ENCODE measurements at regions of chr12 and their contacts with region 1.

Region 1: GRCh38 chr12:46372544-46373110 is at the start of gene SLC38A2:
- DNase-seq: peak; percentile 95 to 98 (median 96)
- ATAC-seq: peak; percentile 96
- H3K4me3 ChIP-seq: peak within 1 kb of the TSS; percentile 87
- H3K4me3 Mint-ChIP-seq: peak within 1 kb of the TSS; percentile 79 to 99 (median 96)
- H3K27ac ChIP-seq: peak within 1 kb of the TSS; percentile 89
- H3K27ac Mint-ChIP-seq: peak within 1 kb of the TSS; percentile 91 to 100 (median 99)
- H3K4me1 ChIP-seq: peaks cover 37 to 41% of the 10 kb centered on the region in 2 donors
- H3K4me1 Mint-ChIP-seq: peaks cover 31 to 68% (median 59%) of the 10 kb centered on the region in 7 donors
- H3K27me3 ChIP-seq: no peaks in the 10 kb centered on the region
- H3K27me3 Mint-ChIP-seq: peaks cover 0 to 11% (median 0%) of the 10 kb centered on the region in 5 donors
- total RNA-seq, gene SLC38A2: 157 to 269 (median 175) TPM

Region 2: GRCh38 chr12:46153268-46153872 is 219.3 kb before region 1 on chr12:
- CTCF ChIA-PET with region 1: no interaction called
- POLR2A ChIA-PET with region 1: interaction called, 4 read pairs
- intact Hi-C with region 1: loop called (anchors 2 to 5 kb)
- DNase-seq: peak in 6 of 9 donors; percentile 26 to 61 (median 47)
- ATAC-seq: no peak
- H3K4me3 ChIP-seq: no peak overlapping the region
- H3K4me3 Mint-ChIP-seq: peak overlapping the region in 4 of 10 donors; percentile 31 to 52 (median 40)
- H3K27ac ChIP-seq: no peak overlapping the region
- H3K27ac Mint-ChIP-seq: no peak overlapping the region
- H3K4me1 ChIP-seq: peaks cover 0 to 17% of the 10 kb centered on the region in 2 donors
- H3K4me1 Mint-ChIP-seq: peaks cover 3 to 31% (median 13%) of the 10 kb centered on the region in 7 donors
- H3K27me3 ChIP-seq: no peaks in the 10 kb centered on the region
- H3K27me3 Mint-ChIP-seq: peaks cover 0 to 19% (median 4%) of the 10 kb centered on the region in 5 donors

Region 3: DNA sequence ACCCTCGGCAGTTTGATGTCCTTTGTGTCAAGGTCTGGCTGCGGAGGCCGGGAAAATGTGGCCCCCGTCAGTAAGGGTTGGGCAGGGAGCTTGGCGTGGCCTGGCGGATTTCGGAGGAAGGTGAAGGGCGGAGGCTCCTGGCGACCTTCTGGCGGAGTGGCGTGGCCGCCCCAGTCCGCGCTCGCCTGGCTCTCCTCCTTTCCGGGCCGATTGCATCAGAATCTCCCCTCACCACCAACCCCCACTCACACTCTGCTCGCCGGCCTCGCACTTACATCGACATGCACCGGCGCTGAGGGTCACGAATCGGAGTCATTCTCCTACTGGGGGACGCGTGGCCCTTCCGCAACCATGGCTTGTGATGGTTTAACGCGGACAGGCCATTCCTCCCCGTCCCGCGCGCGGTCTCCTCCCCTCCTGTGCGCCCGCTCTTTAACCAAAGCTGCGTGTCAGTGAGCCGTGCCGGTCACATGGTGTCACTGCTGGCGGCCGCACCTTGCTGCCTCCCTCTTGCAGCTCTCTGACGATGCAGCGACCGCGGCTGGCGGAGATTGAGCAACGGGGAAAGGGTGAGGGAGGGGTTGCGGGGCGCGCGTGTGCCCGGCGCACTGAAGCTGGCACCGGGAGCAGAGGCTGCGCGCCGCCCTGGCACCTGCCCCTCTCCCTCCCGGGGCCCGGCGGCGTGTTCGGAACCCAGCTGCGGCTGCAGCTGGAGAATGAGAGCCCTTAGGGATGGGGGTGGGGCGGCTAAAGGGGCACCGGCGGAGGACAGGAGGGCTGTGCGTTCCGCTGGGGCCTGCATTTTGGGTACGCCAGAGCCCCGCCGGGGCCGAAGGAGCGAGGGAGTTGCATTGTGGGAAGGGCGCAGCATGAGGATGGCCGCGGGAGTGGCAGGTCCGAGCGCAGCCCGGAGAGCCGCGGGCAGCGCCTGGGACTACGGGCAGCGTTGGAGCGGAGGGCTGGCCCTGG is 103.8 kb before region 1 on chr12 and contains the start of gene SLC38A1:
- CTCF ChIA-PET with region 1: interaction called, 5 read pairs
- POLR2A ChIA-PET with region 1: interaction called, 29 read pairs
- intact Hi-C with region 1: loop called (anchors 1 to 2 kb)
- DNase-seq: peak; percentile 73 to 92 (median 88)
- ATAC-seq: peak; percentile 81
- H3K4me3 ChIP-seq: peak within 1 kb of the TSS; percentile 93
- H3K4me3 Mint-ChIP-seq: no peak within 1 kb of the TSS
- H3K27ac ChIP-seq: peak within 1 kb of the TSS; percentile 98
- H3K27ac Mint-ChIP-seq: no peak within 1 kb of the TSS
- H3K4me1 ChIP-seq: peaks cover 35 to 40% of the 10 kb centered on the region in 2 donors
- H3K4me1 Mint-ChIP-seq: peaks cover 9 to 35% (median 31%) of the 10 kb centered on the region in 7 donors
- H3K27me3 ChIP-seq: no peaks in the 10 kb centered on the region
- H3K27me3 Mint-ChIP-seq: no peaks in the 10 kb centered on the region
- total RNA-seq, gene SLC38A1: 172 to 283 (median 249) TPM

Region 4: DNA sequence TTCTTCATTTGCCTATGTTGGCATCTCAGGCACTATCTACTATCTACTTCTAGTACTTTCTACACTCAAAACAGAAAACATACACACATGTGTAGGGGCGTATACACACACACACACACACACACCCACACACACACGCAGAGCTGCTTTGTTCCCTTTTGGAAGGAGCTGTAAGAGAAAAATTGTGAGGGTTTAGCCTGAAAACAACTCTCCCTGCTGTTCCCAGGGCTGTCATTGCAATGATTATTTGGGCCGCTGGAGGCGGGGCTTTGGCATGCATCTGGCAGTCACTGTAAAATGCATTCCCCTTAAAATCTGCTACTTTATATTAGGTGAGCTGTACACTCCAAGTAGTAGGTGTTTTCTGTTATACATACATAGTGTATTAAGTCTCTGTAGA is 29.0 kb after region 1 on chr12:
- CTCF ChIA-PET with region 1: no interaction called
- POLR2A ChIA-PET with region 1: no interaction called
- intact Hi-C with region 1: loop called in 1 of 2 experiments (anchors 1 kb)
- DNase-seq: no peak
- ATAC-seq: no peak
- H3K4me3 ChIP-seq: no peak overlapping the region
- H3K4me3 Mint-ChIP-seq: no peak overlapping the region
- H3K27ac ChIP-seq: no peak overlapping the region
- H3K27ac Mint-ChIP-seq: peak overlapping the region in 1 of 9 donors; percentile 32
- H3K4me1 ChIP-seq: peaks cover 0 to 11% of the 10 kb centered on the region in 2 donors
- H3K4me1 Mint-ChIP-seq: peaks cover 28 to 76% (median 67%) of the 10 kb centered on the region in 7 donors
- H3K27me3 ChIP-seq: no peaks in the 10 kb centered on the region
- H3K27me3 Mint-ChIP-seq: no peaks in the 10 kb centered on the region

Region 5: DNA sequence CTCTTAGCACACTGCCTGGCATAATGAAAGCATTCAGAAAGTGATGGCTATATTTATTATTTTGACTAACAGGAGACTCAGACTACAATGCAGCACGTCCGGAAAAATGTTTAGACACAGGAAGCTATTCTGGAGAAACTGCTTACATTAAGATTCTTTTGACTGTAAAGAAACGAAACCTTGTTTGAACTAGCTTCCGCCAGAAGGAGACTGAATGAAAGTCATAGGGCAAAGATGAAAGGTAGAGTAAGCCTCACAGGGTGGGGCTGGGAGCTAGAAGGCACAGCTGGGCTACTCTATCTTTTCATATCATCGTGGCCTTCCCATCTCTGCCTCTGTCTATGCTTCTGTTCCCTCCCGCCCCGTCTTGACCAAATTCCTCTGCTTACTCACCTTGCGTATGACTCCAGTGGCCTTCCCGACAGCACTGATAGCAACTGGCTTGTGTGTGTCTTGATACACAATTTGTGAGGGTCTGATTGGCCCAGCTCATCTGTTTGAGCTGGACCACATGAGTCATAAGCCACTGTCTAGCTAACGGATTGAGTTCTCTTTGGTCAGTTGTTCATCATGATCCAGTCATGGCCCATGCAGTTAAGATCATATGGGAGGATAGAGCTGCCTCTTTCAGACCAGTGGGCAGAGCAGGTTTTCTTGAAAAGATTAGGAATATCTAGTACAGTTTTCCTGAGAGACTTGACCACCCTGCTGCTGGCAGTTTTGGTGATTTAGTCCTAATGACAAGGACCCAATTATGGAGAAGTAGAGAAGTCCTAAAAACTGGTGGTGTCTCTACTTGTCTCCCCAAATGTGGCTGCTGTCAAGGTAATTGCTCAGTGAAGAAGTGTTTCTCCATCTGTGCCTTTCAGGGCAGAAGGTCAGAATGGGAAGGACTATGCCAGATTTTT is 151.5 kb after region 1 on chr12:
- CTCF ChIA-PET with region 1: no interaction called
- POLR2A ChIA-PET with region 1: interaction called, 7 read pairs
- intact Hi-C with region 1: loop called (anchors 1 to 2 kb)
- DNase-seq: peak in 8 of 9 donors; percentile 53 to 76 (median 69)
- ATAC-seq: peak; percentile 95
- H3K4me3 ChIP-seq: peak overlapping the region; percentile 5
- H3K4me3 Mint-ChIP-seq: peak overlapping the region; percentile 68 to 84 (median 76)
- H3K27ac ChIP-seq: peak overlapping the region; percentile 48
- H3K27ac Mint-ChIP-seq: peak overlapping the region; percentile 83 to 97 (median 90)
- H3K4me1 ChIP-seq: peaks cover 7 to 19% of the 10 kb centered on the region in 2 donors
- H3K4me1 Mint-ChIP-seq: peaks cover 21 to 57% (median 44%) of the 10 kb centered on the region in 7 donors
- H3K27me3 ChIP-seq: no peaks in the 10 kb centered on the region
- H3K27me3 Mint-ChIP-seq: no peaks in the 10 kb centered on the region

Region 6: GRCh38 chr12:46556105-46556559 is 183.5 kb after region 1 on chr12:
- CTCF ChIA-PET with region 1: no interaction called
- POLR2A ChIA-PET with region 1: no interaction called
- intact Hi-C with region 1: no loop called
- DNase-seq: no peak
- ATAC-seq: no peak
- H3K4me3 ChIP-seq: no peak overlapping the region
- H3K4me3 Mint-ChIP-seq: no peak overlapping the region
- H3K27ac ChIP-seq: no peak overlapping the region
- H3K27ac Mint-ChIP-seq: no peak overlapping the region
- H3K4me1 ChIP-seq: no peaks in the 10 kb centered on the region
- H3K4me1 Mint-ChIP-seq: peaks cover 0 to 41% (median under 1%) of the 10 kb centered on the region in 7 donors
- H3K27me3 ChIP-seq: no peaks in the 10 kb centered on the region
- H3K27me3 Mint-ChIP-seq: no peaks in the 10 kb centered on the region

Region 7: DNA sequence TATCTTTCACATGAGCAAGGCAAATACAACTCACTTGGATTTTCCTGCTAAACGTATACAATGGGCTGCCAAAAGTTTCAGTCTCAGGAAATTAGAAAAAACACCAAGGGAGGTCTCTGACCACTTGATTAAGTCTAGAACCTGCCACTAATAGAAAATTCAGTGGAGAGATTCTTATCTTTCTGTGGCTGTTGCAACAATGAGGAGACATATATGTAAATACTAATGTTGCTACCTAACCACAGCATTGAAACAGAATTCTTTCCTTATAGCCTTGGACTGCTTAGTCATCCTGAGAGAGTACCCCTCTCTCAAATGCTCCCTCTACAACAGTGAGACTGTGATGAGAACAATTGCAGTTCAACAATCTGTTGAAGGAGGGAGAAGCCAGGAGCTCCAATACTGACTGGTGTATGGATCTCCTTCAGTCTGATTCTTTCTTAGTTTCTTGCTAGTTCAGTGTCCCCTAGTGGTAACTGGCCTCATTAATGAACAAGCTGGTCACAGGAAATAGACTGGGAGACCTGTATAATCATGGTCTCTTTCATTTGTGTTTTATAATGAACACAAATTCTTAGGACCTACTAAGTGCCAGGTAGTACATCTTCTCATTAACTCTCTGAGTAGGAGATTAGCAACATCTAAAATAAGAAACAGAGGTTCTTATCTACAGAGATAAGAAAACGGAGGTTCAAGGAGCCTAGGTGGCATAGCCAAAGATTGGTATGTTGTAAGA is 288.7 kb after region 1 on chr12:
- CTCF ChIA-PET with region 1: no interaction called
- POLR2A ChIA-PET with region 1: interaction called, 4 read pairs
- intact Hi-C with region 1: loop called (anchors 1 kb)
- DNase-seq: peak in 7 of 9 donors; percentile 18 to 61 (median 50)
- ATAC-seq: peak; percentile 79
- H3K4me3 ChIP-seq: no peak overlapping the region
- H3K4me3 Mint-ChIP-seq: peak overlapping the region in 2 of 10 donors; percentile 31 to 43
- H3K27ac ChIP-seq: no peak overlapping the region
- H3K27ac Mint-ChIP-seq: peak overlapping the region in 4 of 9 donors; percentile 32 to 58 (median 40)
- H3K4me1 ChIP-seq: peaks cover 0 to 9% of the 10 kb centered on the region in 2 donors
- H3K4me1 Mint-ChIP-seq: peaks cover 11 to 53% (median 28%) of the 10 kb centered on the region in 7 donors
- H3K27me3 ChIP-seq: no peaks in the 10 kb centered on the region
- H3K27me3 Mint-ChIP-seq: no peaks in the 10 kb centered on the region

Region 8: DNA sequence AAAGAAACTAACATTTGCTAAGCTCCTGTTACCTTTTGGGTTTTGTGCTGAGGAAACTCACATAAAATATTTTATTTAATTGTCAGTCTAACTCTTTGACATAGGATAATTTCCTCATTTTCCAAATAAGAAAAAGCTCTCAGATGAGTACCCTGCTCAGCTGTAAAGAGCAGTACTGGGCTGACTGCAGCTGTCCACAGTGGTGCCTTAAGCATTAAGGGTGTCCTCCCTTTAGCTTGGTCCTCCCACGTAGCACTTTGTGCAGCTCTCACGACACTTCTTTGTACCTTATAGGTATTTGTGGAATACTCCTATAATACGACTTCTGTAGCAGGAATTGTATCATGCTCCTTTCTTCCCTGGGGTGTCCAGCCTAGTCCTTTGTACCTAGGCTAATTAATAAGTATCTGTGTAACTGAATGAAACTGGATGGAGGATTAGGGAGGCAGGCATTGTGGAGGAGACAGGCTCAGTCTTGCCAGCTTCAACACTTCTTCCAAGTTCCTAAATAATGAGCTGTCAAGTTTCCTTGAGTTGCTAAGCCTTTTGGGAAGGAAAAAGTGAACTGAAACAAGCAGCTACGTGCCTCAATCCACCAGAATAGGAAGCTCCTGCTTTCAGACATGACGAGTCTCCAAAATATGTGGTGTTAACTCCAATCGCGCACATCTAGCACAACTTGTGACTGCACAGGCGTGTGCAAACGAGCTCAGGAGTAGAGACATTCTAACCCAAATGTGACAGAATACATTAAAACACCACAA is 330.1 kb after region 1 on chr12:
- CTCF ChIA-PET with region 1: no interaction called
- POLR2A ChIA-PET with region 1: no interaction called
- intact Hi-C with region 1: no loop called
- DNase-seq: no peak
- ATAC-seq: no peak
- H3K4me3 ChIP-seq: no peak overlapping the region
- H3K4me3 Mint-ChIP-seq: no peak overlapping the region
- H3K27ac ChIP-seq: no peak overlapping the region
- H3K27ac Mint-ChIP-seq: no peak overlapping the region
- H3K4me1 ChIP-seq: no peaks in the 10 kb centered on the region
- H3K4me1 Mint-ChIP-seq: no peaks in the 10 kb centered on the region
- H3K27me3 ChIP-seq: no peaks in the 10 kb centered on the region
- H3K27me3 Mint-ChIP-seq: peaks cover 0 to 20% (median 4%) of the 10 kb centered on the region in 5 donors

Region 9: DNA sequence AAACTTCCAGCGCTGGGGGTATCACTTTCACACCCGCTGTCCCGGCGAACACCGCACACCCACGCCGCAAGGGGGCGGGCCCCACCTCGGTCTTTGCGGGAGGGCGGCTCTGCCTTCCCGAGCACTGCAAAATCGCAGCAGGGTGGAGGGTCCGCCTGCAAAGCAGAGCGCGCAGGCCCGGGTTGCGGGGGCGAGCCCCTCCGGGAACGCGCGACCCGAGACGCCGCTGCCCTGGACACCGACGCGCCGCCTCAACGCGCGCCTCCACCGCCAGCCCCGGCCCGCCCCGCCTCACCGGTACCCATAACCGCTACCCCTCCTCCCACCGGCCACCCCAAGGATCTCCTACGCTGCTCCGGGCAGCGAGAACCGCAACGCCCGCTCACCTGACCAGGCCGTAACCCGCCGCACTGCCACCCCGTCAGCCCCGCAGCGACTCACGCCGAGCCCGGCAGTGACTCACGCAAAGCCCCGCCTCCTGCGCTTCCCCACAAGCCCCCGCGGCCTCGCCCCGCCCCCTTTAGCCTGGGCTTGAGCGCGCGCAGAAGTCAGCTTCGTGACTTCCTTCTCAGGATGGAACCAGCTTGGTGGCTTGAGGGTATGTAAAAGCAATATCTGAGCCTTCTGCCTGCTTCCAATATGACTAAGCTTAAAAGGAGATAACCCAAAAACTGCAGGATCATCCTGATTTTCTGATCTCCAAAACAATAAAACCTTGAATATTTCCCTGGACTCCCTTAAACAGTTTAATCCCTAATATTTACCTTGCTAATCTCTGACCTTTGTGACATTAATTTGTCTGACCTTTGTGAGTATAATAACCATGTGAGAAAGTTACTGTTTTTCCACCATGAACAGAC is 1333.2 kb after region 1 on chr12 and contains the start of gene RPAP3:
- CTCF ChIA-PET with region 1: no interaction called
- POLR2A ChIA-PET with region 1: no interaction called
- intact Hi-C with region 1: loop called (anchors 5 kb)
- DNase-seq: peak; percentile 91 to 99 (median 95)
- ATAC-seq: peak; percentile 97
- H3K4me3 ChIP-seq: peak within 1 kb of the TSS; percentile 59
- H3K4me3 Mint-ChIP-seq: peak within 1 kb of the TSS; percentile 92 to 99 (median 98)
- H3K27ac ChIP-seq: peak within 1 kb of the TSS; percentile 85
- H3K27ac Mint-ChIP-seq: peak within 1 kb of the TSS; percentile 93 to 99 (median 97)
- H3K4me1 ChIP-seq: peaks cover 21 to 27% of the 10 kb centered on the region in 2 donors
- H3K4me1 Mint-ChIP-seq: peaks cover 48 to 73% (median 63%) of the 10 kb centered on the region in 7 donors
- H3K27me3 ChIP-seq: no peaks in the 10 kb centered on the region
- H3K27me3 Mint-ChIP-seq: no peaks in the 10 kb centered on the region
- total RNA-seq, gene RPAP3: 28.5 to 51.3 (median 43.9) TPM

Measured in naive thymus-derived CD4-positive, alpha-beta T cell (primary cell).